Heart right ventricle (tissue), 16 donors: ENCODE measurements at regions of chr10 and their contacts with region 1.

Region 1: DNA sequence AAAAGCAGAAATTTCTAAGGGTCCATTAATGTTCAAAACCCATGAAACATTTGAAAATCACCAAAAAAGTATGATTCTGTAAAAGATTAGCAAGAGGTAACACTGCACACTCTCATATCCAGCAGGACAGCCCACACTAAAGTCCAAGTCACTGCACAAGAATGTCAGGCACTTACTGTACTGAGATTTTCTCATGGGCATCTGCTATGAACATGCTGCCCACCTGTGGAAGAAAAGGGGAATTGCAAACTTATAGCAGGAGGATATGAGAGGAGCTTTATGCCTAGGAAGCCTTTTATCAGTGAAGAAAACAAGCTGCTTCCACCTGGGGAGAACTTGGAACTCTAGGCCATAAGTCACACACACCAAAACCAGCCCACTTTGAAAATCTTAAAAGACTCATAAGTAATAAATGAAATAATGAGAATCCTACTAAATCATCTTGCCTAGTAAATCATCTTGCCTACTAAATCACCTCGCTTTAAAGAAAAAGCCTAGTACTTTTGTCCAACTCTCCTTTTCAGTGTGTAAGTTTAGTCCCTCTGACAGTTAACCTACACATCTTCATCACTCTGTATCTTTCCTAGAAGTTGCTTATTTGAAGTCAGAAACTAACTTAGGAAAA is 46.1 kb downstream of the ARMH3 start:
- DNase-seq: peak in 1 of 2 donors; percentile 56
- ATAC-seq: peak; percentile 86 to 98 (median 94)
- H3K4me3 ChIP-seq: no peak overlapping the region
- H3K27ac ChIP-seq: no peak overlapping the region
- H3K4me1 ChIP-seq: peaks cover 0 to 22% (median 0%) of the 10 kb centered on the region in 9 donors
- H3K27me3 ChIP-seq: no peaks in the 10 kb centered on the region
- CTCF ChIP-seq: peak; percentile 70 to 94 (median 87)

Region 2: DNA sequence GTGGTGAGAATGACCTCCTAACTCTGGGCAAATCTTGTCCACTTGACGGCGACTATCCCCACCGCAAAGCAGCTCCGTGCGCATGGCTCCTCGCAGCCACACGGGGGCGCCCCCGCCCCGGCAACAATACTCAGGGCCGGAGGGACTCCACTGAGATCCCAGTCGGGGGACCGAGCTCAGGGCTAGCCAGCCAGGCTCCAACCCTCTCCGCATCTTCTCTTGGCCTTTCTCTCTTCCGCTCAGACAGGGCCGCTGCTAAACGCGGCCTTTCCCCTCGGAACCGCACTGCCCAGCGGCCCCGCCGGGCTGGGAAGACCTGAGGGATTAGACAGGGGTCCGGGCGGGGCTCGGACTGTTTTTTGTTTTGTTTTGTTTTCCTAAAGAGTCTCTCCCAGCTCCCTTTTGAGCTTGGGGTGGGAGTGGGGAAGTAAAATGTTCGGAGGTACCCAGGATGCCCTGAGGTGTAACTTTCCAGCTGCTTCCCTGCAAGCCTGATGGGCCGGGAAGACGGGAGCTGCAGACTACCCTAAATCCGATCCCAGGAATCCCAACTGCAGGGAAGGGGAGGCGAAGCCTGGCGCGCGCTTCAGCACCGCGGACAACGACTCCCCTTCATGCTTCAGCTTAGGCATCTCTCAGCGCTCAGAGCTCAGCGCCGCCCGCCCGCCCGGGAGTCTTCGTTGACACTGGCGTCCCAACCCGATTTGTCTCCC is 169.0 kb before region 1 on chr10:
- intact Hi-C with region 1: loop called (anchors 2 to 10 kb)
- DNase-seq: peak; percentile 80 to 84
- ATAC-seq: peak; percentile 70 to 92 (median 86)
- H3K4me3 ChIP-seq: peak overlapping the region in 9 of 10 donors; percentile 24 to 58 (median 43)
- H3K27ac ChIP-seq: peak overlapping the region in 2 of 10 donors; percentile 10 to 53
- H3K4me1 ChIP-seq: peaks cover 10 to 75% (median 45%) of the 10 kb centered on the region in 9 donors
- H3K27me3 ChIP-seq: no peaks in the 10 kb centered on the region
- CTCF ChIP-seq: peak; percentile 89 to 98 (median 90)

Region 3: DNA sequence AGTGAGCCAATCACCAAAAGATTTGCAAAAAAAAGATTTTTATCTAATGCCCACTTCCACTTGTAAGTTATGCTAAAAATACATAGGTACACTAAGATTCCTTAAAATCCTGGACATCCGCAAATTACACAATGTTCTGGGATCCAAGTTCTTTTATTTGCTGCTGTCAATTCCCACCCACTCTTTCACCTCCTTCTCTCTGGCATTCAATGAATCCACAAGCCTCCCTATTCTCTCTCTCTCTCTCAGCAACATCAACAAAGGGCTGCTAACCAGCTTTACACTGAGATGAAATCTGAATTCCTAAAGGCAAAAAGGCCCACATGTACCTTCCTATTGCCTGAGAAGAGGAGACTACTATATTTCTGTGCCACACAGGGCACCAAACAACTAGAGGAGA is 53.8 kb before region 1 on chr10:
- intact Hi-C with region 1: loop called in 1 of 10 experiments (anchors 2 kb)
- DNase-seq: no peak
- ATAC-seq: no peak
- H3K4me3 ChIP-seq: no peak overlapping the region
- H3K27ac ChIP-seq: no peak overlapping the region
- H3K4me1 ChIP-seq: peaks cover 0 to 27% (median 9%) of the 10 kb centered on the region in 9 donors
- H3K27me3 ChIP-seq: no peaks in the 10 kb centered on the region
- CTCF ChIP-seq: no peak

Region 4: GRCh38 chr10:102072673-102073527 is 63.0 kb after region 1 on chr10:
- intact Hi-C with region 1: loop called in 1 of 10 experiments (anchors 2 kb)
- DNase-seq: peak; percentile 70 to 83
- ATAC-seq: peak; percentile 78 to 90 (median 83)
- H3K4me3 ChIP-seq: no peak overlapping the region
- H3K27ac ChIP-seq: no peak overlapping the region
- H3K4me1 ChIP-seq: peaks cover 2 to 22% (median 12%) of the 10 kb centered on the region in 9 donors
- H3K27me3 ChIP-seq: no peaks in the 10 kb centered on the region
- CTCF ChIP-seq: peak; percentile 79 to 99 (median 92)